WTC11 (cell line): ENCODE measurements at regions of chr3 and their contacts with region 1.

Region 1: DNA sequence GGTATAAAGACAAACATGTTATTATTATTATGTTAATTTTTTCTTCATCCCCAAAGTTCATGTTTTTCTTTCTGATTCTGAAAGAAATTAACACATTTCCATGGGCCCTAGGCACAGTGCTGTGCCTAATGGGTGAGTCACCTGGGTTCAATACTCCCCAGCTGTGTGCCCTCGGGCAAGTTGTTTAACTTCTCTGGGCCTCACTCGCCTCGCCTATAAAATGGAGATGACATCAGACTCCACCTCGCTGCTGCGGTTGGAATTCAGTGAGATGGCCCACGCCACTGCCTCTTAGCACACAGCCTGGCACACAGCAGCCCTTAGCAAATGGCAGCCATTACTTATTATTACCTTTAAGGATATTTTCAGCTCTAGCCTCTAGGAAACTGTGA is 22.6 kb downstream of the DNASE1L3 start:
- DNase-seq: no peak
- ATAC-seq: no peak
- H3K4me3 Mint-ChIP-seq: no peak overlapping the region
- H3K27ac Mint-ChIP-seq: no peak overlapping the region; the same call in 1 of the 2 replicates
- H3K4me1 Mint-ChIP-seq: peaks cover 16% of the 10 kb centered on the region
- H3K27me3 Mint-ChIP-seq: no peaks in the 10 kb centered on the region
- CTCF ChIP-seq: no peak

Region 2: DNA sequence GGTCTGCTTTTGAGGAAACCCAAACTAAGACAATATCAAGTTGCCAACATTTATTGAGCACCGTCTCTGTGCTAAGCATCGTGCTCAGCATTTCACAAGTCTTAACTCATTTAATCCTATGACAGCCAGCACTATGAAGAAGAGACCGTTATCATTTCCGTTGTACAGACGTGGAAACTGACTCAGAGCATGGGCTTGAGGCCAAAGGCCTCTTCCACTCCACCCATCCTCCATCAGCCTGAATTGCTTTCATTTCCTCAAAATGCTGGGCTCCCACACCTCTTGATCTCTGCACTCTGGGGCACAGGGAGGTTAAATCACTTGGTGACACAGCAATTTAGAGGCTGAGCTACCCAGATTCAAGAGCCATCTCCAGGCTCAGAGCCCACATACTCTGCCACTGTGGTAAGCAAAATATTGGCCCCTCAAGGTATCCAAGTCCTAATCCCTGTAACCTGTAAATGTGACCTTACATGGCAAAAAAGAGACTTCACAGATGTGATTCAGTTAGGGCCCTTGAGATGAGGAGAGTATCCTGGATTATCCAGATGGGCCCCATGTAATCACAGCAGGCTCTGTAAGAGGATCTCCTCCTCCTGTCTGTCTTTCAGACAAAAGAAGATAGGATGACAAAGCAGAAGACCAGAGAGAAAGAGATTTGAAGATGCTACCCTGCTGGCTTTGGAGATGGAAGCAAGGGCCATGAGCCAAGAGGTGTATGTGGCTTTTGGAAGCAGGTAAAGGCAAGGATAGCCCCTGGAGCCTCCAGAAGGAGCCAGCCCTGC is 204.2 kb before region 1 on chr3:
- CTCF ChIA-PET with region 1: no interaction called
- POLR2A ChIA-PET with region 1: no interaction called
- DNase-seq: no peak
- ATAC-seq: no peak; the same call in 1 of the 2 replicates
- H3K4me3 Mint-ChIP-seq: no peak overlapping the region
- H3K27ac Mint-ChIP-seq: no peak overlapping the region
- H3K4me1 Mint-ChIP-seq: peaks cover 4% of the 10 kb centered on the region; the same call in 1 of the 2 replicates
- H3K27me3 Mint-ChIP-seq: no peaks in the 10 kb centered on the region
- CTCF ChIP-seq: no peak

Region 3: GRCh38 chr3:58041654-58042324 is 146.4 kb before region 1 on chr3:
- CTCF ChIA-PET with region 1: no interaction called
- POLR2A ChIA-PET with region 1: no interaction called
- DNase-seq: no peak
- ATAC-seq: peak; percentile 61
- H3K4me3 Mint-ChIP-seq: peak overlapping the region; percentile 20; the same call in 1 of the 2 replicates
- H3K27ac Mint-ChIP-seq: peak overlapping the region; percentile 98
- H3K4me1 Mint-ChIP-seq: peaks cover 86% of the 10 kb centered on the region
- H3K27me3 Mint-ChIP-seq: no peaks in the 10 kb centered on the region
- CTCF ChIP-seq: no peak

Region 4: DNA sequence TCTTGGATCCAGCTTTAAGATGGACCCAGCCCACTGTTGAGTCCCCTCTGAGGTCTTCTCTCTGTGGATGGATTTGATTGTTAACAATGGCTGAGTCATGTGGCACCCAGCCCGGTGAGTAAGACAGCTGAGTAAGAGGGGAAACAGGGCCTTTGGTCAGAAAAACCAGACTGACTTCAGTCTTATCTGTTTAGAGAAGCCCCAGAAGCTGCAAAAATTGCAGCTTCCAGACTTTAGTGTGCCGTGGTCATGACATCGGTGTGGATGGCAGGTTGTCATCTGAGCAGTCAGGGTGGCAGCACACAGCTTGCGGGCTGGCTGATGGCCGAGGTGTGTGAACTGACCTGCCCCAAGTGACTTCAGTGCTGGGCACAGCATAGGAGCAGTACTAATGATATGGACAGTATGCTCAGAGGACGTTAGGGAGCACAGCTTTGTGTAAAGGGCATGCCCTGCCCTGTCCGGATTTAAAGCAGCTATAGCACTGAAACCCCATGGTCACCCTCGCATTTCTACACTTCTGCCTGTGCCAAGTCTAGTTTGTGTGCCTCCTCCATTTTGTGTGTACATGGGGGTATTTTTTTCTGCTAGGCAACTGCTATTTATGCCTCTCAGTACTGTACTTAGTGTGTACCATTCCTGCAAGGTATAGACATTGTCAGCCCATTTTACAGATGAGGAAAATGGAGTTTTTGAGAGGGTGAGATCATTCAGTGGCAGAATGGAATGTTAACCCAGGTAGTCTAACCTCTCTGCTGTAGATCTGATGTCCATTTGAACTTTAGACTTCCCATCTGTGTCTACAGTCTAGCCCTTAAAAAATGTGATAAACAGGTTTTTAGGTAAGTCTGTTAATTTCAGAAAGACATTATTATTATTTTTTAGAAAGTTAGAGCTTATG is 135.5 kb before region 1 on chr3:
- CTCF ChIA-PET with region 1: no interaction called
- POLR2A ChIA-PET with region 1: no interaction called
- DNase-seq: no peak
- ATAC-seq: no peak
- H3K4me3 Mint-ChIP-seq: no peak overlapping the region
- H3K27ac Mint-ChIP-seq: peak overlapping the region; percentile 57; the same call in 1 of the 2 replicates
- H3K4me1 Mint-ChIP-seq: peaks cover 54% of the 10 kb centered on the region
- H3K27me3 Mint-ChIP-seq: no peaks in the 10 kb centered on the region
- CTCF ChIP-seq: no peak

Region 5: DNA sequence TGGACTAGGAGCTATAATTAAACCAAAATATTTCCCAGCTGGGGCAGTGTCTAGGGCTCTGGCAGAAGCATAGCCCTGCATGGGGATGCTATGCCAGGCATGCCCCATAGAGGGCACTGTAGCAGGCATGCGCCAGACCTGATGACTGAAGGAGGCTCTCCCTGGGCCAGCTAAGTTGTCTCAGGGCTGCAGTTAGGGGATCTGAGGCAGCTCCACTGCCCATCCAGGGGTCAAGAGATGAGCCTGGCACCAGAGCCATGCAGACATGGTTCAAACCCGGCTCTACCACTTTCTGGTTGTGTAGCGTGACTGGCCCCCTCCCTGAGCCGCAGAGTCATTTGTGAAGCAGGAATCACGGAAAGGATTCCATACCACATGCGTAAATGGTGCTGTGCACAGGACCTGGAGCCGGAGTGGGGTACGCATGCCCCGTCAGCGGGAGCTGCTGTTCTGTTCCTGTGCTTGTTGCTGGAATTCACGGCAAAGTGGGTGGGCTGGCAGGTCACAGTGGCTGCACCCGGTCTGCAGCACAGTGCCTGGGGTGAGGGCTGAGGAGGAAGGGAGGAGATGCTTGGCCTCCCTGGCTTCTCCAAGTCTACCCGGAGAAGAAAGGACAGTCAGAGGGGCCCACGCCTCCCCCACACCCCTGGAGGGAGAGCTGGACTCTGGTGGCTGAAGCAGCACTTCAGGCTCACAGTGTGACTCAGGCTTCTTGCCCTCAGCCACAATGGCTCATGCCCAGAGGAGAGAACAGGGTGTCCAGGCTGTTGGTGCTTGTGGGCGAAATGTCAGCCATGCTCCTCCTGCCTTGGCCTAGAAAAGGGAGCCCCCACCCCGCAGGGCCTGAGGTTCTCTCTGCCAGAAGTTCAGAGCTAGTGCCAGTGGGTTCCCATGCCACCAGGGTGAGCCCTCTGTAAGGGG is 20.5 kb before region 1 on chr3:
- CTCF ChIA-PET with region 1: interaction called, 18 read pairs
- POLR2A ChIA-PET with region 1: interaction called, 3 read pairs
- DNase-seq: peak; percentile 82
- ATAC-seq: peak; percentile 94
- H3K4me3 Mint-ChIP-seq: no peak overlapping the region
- H3K27ac Mint-ChIP-seq: no peak overlapping the region
- H3K4me1 Mint-ChIP-seq: peaks cover 2% of the 10 kb centered on the region; the same call in 1 of the 2 replicates
- H3K27me3 Mint-ChIP-seq: no peaks in the 10 kb centered on the region
- CTCF ChIP-seq: peak; percentile 97

Region 6: GRCh38 chr3:58217209-58217811 is 29.1 kb after region 1 on chr3:
- CTCF ChIA-PET with region 1: interaction called, 118 read pairs
- POLR2A ChIA-PET with region 1: no interaction called
- DNase-seq: peak; percentile 78
- ATAC-seq: peak; percentile 91
- H3K4me3 Mint-ChIP-seq: peak overlapping the region; percentile 46
- H3K27ac Mint-ChIP-seq: peak overlapping the region; percentile 71; the same call in 1 of the 2 replicates
- H3K4me1 Mint-ChIP-seq: peaks cover 10% of the 10 kb centered on the region
- H3K27me3 Mint-ChIP-seq: no peaks in the 10 kb centered on the region
- CTCF ChIP-seq: peak; percentile 51; the same call in 1 of the 2 replicates

Region 7: DNA sequence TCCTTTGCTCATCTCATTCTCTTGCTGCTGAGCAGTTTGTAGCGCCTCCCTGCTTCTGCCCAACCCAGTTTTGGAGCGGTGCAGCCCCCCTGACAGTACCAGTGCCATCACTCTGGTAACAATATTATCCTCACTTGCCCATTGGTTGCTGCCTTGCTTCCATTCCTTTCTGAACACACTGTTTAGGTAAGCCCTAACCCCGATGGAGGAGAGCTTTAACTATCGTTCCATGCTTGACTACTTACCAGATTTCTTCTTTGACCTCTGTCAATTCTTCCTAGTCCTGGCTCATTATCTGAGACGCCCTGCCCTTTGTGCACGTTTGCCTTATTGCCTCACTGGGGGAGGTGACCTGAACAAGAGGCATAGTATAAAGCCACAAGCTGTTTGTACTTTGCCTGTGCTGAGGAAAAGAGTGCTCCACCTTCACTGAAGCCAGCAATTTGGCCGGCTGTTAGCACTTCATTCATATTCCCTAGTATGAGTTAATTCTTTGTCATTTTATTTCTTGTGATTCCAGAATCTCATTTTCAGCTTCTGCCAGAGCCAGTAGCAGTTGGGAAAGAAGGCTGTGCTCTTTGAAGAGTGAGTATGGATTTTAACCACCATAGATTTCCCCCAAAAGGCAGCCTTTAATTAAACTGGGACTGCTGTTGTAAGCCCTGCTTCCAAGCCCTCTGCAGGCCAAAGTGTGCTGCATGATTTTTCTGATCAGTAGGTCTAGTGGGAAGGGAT is 61.4 kb after region 1 on chr3:
- CTCF ChIA-PET with region 1: interaction called, 13 read pairs
- POLR2A ChIA-PET with region 1: interaction called, 3 read pairs
- DNase-seq: no peak
- ATAC-seq: peak; percentile 77
- H3K4me3 Mint-ChIP-seq: no peak overlapping the region
- H3K27ac Mint-ChIP-seq: peak overlapping the region; percentile 76; the same call in 1 of the 2 replicates
- H3K4me1 Mint-ChIP-seq: peaks cover 6% of the 10 kb centered on the region
- H3K27me3 Mint-ChIP-seq: no peaks in the 10 kb centered on the region
- CTCF ChIP-seq: no peak

Region 8: GRCh38 chr3:58529516-58530353 is 341.6 kb after region 1 on chr3:
- CTCF ChIA-PET with region 1: interaction called, 12 read pairs
- POLR2A ChIA-PET with region 1: no interaction called
- DNase-seq: peak; percentile 88
- ATAC-seq: peak; percentile 88
- H3K4me3 Mint-ChIP-seq: no peak overlapping the region
- H3K27ac Mint-ChIP-seq: peak overlapping the region; percentile 63; the same call in 1 of the 2 replicates
- H3K4me1 Mint-ChIP-seq: peaks cover 14% of the 10 kb centered on the region
- H3K27me3 Mint-ChIP-seq: no peaks in the 10 kb centered on the region
- CTCF ChIP-seq: peak; percentile 32; the same call in 1 of the 2 replicates

Region 9: DNA sequence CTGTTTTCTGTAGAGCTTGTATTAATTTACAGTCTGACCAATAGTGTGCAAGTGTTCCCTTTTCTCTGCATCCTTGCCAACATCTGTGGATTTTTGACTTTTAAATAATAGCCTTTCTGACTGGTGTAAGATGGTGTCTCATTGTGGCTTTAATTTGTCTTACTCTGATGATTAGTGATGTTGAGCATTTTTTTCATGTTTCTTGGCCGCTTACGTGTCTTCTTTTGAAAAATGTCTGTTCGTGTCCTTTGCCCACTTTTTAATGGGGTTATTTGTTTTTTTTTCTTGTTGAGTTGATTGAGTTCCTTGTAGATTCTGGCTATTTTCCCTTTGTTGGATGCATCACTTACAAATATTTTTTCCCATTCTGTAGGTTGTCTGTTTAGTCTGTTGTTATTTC is 356.4 kb after region 1 on chr3:
- CTCF ChIA-PET with region 1: no interaction called
- POLR2A ChIA-PET with region 1: no interaction called
- DNase-seq: no peak
- ATAC-seq: no peak
- H3K4me3 Mint-ChIP-seq: no peak overlapping the region
- H3K27ac Mint-ChIP-seq: no peak overlapping the region
- H3K4me1 Mint-ChIP-seq: no peaks in the 10 kb centered on the region
- H3K27me3 Mint-ChIP-seq: no peaks in the 10 kb centered on the region
- CTCF ChIP-seq: no peak